ENCODE measurements at regions of chr11 and their contacts with region 1.

Region 1: GRCh38 chr11:125345421-125346178 is 150.5 kb downstream of the FEZ1 start:
- DNase-seq: no peak
- H3K4me3 ChIP-seq: no peak overlapping the region
- H3K27me3 ChIP-seq: peaks cover 4% of the 10 kb centered on the region
- CTCF ChIP-seq: peak; percentile 91

Region 2: GRCh38 chr11:124953753-124954589 is 391.6 kb before region 1 on chr11 and contains the start of gene CCDC15:
- CTCF ChIA-PET with region 1: interaction called, 17 read pairs
- POLR2A ChIA-PET with region 1: no interaction called
- DNase-seq: peak; percentile 88
- H3K4me3 ChIP-seq: peak within 1 kb of the TSS; percentile 63
- H3K27me3 ChIP-seq: no peaks in the 10 kb centered on the region
- CTCF ChIP-seq: no peak
- polyA plus RNA-seq, gene CCDC15: 0.66 and 1.3 TPM in 2 replicates

Region 3: DNA sequence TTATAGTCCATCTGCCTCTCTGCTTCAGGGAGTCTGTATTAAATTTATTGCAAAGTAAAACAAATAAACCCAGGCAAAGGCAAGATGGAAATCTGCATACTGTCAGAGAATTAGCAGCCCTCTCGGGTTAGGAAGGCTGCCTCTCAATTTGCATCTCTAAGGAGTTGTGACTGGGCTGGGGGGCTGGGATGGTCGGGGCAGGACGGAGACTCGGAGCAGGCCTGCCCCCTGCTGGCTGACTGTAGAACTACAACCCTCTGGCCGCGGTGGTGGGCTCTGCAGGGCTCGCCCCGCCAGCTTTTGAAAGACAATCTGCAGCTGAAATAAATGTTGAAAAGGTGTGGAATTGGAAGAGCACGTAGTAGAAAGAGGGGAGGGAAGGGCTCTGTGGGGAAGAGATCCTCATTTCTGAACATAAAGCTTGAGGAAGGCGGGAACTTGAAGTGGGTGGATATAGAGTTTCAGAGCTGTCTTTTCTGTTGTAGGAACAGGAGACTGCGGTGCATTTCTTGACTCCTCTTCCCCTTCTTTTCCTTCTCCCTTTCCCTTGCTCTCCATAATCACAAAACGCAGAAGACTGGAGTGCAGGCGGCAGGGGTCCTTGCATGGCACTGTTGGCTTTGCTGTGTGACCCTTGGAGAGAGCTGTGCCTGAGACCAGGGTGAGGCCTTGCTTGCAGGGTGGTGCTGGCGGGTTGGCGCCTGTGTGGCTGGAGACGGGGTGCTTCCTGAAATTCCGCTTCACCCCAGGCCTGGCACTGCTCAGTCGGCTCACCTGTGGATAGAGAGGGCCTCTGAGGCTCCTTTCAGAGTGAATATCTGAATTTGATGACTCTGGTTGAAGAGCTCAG is 203.7 kb before region 1 on chr11:
- CTCF ChIA-PET with region 1: interaction called, 16 read pairs
- POLR2A ChIA-PET with region 1: no interaction called
- DNase-seq: no peak
- H3K4me3 ChIP-seq: no peak overlapping the region
- H3K27me3 ChIP-seq: peaks cover 11% of the 10 kb centered on the region
- CTCF ChIP-seq: peak; percentile 97

Region 4: GRCh38 chr11:125211191-125211947 is 134.2 kb before region 1 on chr11:
- CTCF ChIA-PET with region 1: interaction called, 11 read pairs
- POLR2A ChIA-PET with region 1: no interaction called
- DNase-seq: no peak
- H3K4me3 ChIP-seq: no peak overlapping the region
- H3K27me3 ChIP-seq: peaks cover 19% of the 10 kb centered on the region
- CTCF ChIP-seq: no peak

Region 5: GRCh38 chr11:125263268-125263790 is 82.3 kb before region 1 on chr11:
- CTCF ChIA-PET with region 1: interaction called, 11 read pairs
- POLR2A ChIA-PET with region 1: no interaction called
- DNase-seq: peak; percentile 100
- H3K4me3 ChIP-seq: no peak overlapping the region
- H3K27me3 ChIP-seq: peaks cover 10% of the 10 kb centered on the region
- CTCF ChIP-seq: no peak

Region 6: GRCh38 chr11:125335106-125335505 is 10.5 kb before region 1 on chr11:
- CTCF ChIA-PET with region 1: interaction called, 15 read pairs
- POLR2A ChIA-PET with region 1: no interaction called
- DNase-seq: no peak
- H3K4me3 ChIP-seq: no peak overlapping the region
- H3K27me3 ChIP-seq: peaks cover 24% of the 10 kb centered on the region
- CTCF ChIP-seq: no peak

Region 7: GRCh38 chr11:125364121-125364826 is 18.7 kb after region 1 on chr11:
- CTCF ChIA-PET with region 1: interaction called, 45 read pairs
- POLR2A ChIA-PET with region 1: no interaction called
- DNase-seq: no peak
- H3K4me3 ChIP-seq: no peak overlapping the region
- H3K27me3 ChIP-seq: no peaks in the 10 kb centered on the region
- CTCF ChIP-seq: peak; percentile 36

Region 8: GRCh38 chr11:125532668-125533067 is 187.1 kb after region 1 on chr11:
- CTCF ChIA-PET with region 1: no interaction called
- POLR2A ChIA-PET with region 1: no interaction called
- DNase-seq: no peak
- H3K4me3 ChIP-seq: no peak overlapping the region
- H3K27me3 ChIP-seq: peaks cover 1% of the 10 kb centered on the region; the same call in 1 of the 2 replicates
- CTCF ChIP-seq: no peak

Measured in BJ (cell line).